ENCODE measurements at regions of chr11 and their contacts with region 1.

Region 1: GRCh38 chr11:43944761-43945311 is 2.4 kb downstream of the C11orf96 start:
- DNase-seq: peak; percentile 19
- ATAC-seq: peak; percentile 64
- H3K4me3 ChIP-seq: no peak overlapping the region
- H3K27ac ChIP-seq: no peak overlapping the region
- H3K4me1 ChIP-seq: peaks cover 17% of the 10 kb centered on the region
- H3K27me3 ChIP-seq: peaks cover 11 to 43% of the 10 kb centered on the region in 2 experiments
- CTCF ChIP-seq: peak; percentile 73
- EP300 ChIP-seq: no peak
- POLR2A ChIP-seq: no peak
- RAD21 ChIP-seq: no peak

Region 2: GRCh38 chr11:43880640-43881159 is 64.1 kb before region 1 on chr11 and contains the start of gene ALKBH3:
- CTCF ChIA-PET with region 1: no interaction called
- POLR2A ChIA-PET with region 1: no interaction called
- in situ Hi-C with region 1: loop called (anchors 5 kb)
- intact Hi-C with region 1: no loop called
- DNase-seq: peak; percentile 86
- ATAC-seq: peak; percentile 100
- H3K4me3 ChIP-seq: peak within 1 kb of the TSS; percentile 91 to 93 (median 92)
- H3K27ac ChIP-seq: peak within 1 kb of the TSS; percentile 55
- H3K4me1 ChIP-seq: peaks cover 16% of the 10 kb centered on the region
- H3K27me3 ChIP-seq: peaks cover 0 to 6% of the 10 kb centered on the region in 2 experiments; a peak in 1 of 5 replicates
- CTCF ChIP-seq: no peak
- EP300 ChIP-seq: peak in 1 of 2 experiments; percentile 49; a peak in 2 of 4 replicates
- POLR2A ChIP-seq: peak; percentile 48 to 55; a peak in 3 of 4 replicates
- RAD21 ChIP-seq: peak; percentile 66
- total RNA-seq, gene ALKBH3: 36.1 and 49.6 TPM in 2 replicates

Region 3: GRCh38 chr11:43895601-43896000 is 49.2 kb before region 1 on chr11:
- CTCF ChIA-PET with region 1: interaction called, 31 read pairs
- POLR2A ChIA-PET with region 1: no interaction called
- in situ Hi-C with region 1: no loop called
- intact Hi-C with region 1: loop called (anchors 1 kb)
- DNase-seq: no peak
- ATAC-seq: no peak
- H3K4me3 ChIP-seq: no peak overlapping the region
- H3K27ac ChIP-seq: no peak overlapping the region
- H3K4me1 ChIP-seq: no peaks in the 10 kb centered on the region
- H3K27me3 ChIP-seq: no peaks in the 10 kb centered on the region
- CTCF ChIP-seq: no peak
- EP300 ChIP-seq: no peak
- POLR2A ChIP-seq: no peak
- RAD21 ChIP-seq: no peak

Region 4: DNA sequence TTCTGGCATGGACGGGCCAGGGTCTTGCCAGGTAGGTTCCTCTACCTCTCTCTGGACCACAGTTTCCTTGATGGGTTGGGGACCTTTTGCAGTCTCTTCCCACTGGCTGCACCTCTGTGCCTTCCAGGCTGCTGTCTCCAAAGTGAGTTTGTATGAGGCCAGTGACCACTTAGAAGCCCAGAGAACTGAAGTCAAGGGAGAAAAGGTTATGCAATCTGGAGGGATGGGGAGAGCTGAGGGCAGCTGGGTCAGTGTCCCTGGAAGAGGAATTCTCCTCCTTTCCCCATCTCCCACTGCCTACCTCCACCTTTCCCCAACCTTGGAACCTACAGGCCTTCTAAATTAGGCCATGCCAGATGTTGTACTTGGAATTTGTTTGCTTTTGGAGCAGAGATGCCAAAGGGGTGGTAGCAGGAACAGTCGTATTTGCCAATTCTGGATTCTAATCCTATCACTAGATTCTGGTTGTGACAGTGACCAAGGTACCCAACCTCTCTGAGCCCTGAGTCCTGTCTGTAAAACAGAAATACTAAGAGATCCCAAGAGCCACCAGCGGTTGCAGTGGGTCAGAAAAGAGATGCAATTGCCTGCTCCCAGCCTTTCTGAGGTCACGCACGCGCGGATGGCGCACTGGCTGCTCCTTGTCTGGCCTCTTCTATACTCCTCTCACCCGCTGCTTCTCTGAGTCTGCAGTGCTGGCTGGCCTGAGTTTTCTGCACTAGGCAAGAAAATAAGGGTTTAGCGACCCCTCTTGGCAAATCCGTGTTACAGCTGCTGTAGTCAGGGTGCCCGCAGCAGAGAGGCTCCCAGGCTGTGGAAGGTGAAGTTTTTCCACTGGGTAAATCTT is 92.2 kb after region 1 on chr11:
- CTCF ChIA-PET with region 1: no interaction called
- POLR2A ChIA-PET with region 1: no interaction called
- in situ Hi-C with region 1: no loop called
- intact Hi-C with region 1: loop called (anchors 5 kb)
- DNase-seq: peak; percentile 63
- ATAC-seq: peak; percentile 98
- H3K4me3 ChIP-seq: no peak overlapping the region
- H3K27ac ChIP-seq: no peak overlapping the region
- H3K4me1 ChIP-seq: no peaks in the 10 kb centered on the region
- H3K27me3 ChIP-seq: peaks cover 4 to 9% of the 10 kb centered on the region in 2 experiments; a peak in 2 of 5 replicates
- CTCF ChIP-seq: peak; percentile 89
- EP300 ChIP-seq: no peak
- POLR2A ChIP-seq: no peak
- RAD21 ChIP-seq: peak; percentile 76

Region 5: DNA sequence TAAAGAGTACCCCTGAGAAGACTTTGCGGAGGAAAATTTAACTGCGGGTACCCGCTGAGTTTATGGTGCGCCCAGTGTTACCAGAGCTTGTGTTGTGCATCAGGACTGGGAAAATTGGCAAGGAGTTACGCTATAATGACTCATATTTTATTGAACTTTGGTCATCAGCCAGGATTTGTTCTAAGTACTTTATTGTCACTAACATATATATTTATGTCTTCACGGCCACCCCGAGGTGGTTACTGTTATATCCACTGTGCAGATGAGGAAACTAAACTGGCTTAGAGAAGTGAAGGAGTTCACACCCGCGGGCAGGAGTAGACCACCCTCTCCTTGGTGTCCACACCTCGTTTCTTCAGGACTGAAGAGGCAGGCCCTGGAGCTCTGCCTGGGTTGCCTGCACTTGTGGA is 121.9 kb after region 1 on chr11:
- CTCF ChIA-PET with region 1: no interaction called
- POLR2A ChIA-PET with region 1: no interaction called
- in situ Hi-C with region 1: no loop called
- intact Hi-C with region 1: no loop called
- DNase-seq: no peak
- ATAC-seq: no peak
- H3K4me3 ChIP-seq: no peak overlapping the region
- H3K27ac ChIP-seq: no peak overlapping the region
- H3K4me1 ChIP-seq: 0 out of 2 replicates have a peak, but pooled peaks cover 13% of the 10 kb centered on the region
- H3K27me3 ChIP-seq: peaks cover 0 to 8% of the 10 kb centered on the region in 2 experiments; a peak in 2 of 5 replicates
- CTCF ChIP-seq: no peak
- EP300 ChIP-seq: no peak
- POLR2A ChIP-seq: no peak
- RAD21 ChIP-seq: no peak